Aorta (tissue), 5 donors: ENCODE measurements at regions of chr1 and their contacts with region 1.

Region 1: GRCh38 chr1:162854245-162854882 is 6.6 kb downstream of the CCDC190 start:
- DNase-seq: peak; percentile 76 to 82
- ATAC-seq: no peak
- H3K4me3 ChIP-seq: no peak overlapping the region
- H3K27ac ChIP-seq: peak overlapping the region in 1 of 2 donors; percentile 73
- H3K4me1 ChIP-seq: peaks cover 10 to 12% of the 10 kb centered on the region in 2 donors
- H3K27me3 ChIP-seq: no peaks in the 10 kb centered on the region

Region 2: DNA sequence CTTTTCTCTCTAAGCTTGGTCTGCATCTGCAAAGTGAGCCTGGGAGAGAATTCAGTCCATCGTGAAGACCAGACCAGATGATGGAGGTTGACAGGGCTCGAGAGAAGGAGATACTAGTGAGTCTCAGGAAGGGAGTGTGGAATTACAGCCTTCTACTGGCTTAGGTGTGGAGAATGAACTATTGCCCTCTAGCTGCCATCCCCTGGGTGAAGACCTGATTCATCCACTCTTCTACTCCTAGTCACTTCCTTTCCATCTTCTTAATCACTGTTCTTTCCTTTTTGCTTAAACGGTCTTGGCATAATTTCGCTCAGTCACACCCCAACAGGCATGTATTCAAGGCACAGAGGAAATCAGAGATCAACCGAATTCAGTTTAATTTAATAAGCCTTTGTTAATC is 97.8 kb before region 1 on chr1:
- intact Hi-C with region 1: no loop called
- DNase-seq: no peak
- ATAC-seq: no peak
- H3K4me3 ChIP-seq: no peak overlapping the region
- H3K27ac ChIP-seq: no peak overlapping the region
- H3K4me1 ChIP-seq: no peaks in the 10 kb centered on the region
- H3K27me3 ChIP-seq: no peaks in the 10 kb centered on the region

Region 3: GRCh38 chr1:163174524-163175437 is 320.4 kb after region 1 on chr1:
- intact Hi-C with region 1: loop called (anchors 5 kb)
- DNase-seq: peak; percentile 85 to 90
- ATAC-seq: peak; percentile 72
- H3K4me3 ChIP-seq: peak overlapping the region in 1 of 2 donors; percentile 69
- H3K27ac ChIP-seq: peak overlapping the region; percentile 90 to 95
- H3K4me1 ChIP-seq: peaks cover 2 to 3% of the 10 kb centered on the region in 2 donors
- H3K27me3 ChIP-seq: no peaks in the 10 kb centered on the region